IMR-90 (cell line): ENCODE measurements at regions of chr13 and their contacts with region 1.

Region 1: GRCh38 chr13:48749699-48750473 is 96.2 kb downstream of the CYSLTR2 start:
- DNase-seq: peak; percentile 99
- ATAC-seq: peak; percentile 98
- H3K4me3 ChIP-seq: no peak overlapping the region
- H3K27ac ChIP-seq: no peak overlapping the region
- H3K4me1 ChIP-seq: peaks cover 8% of the 10 kb centered on the region
- H3K27me3 ChIP-seq: no peaks in the 10 kb centered on the region
- CTCF ChIP-seq: peak; percentile 58
- POLR2A ChIP-seq: no peak
- RAD21 ChIP-seq: peak; percentile 46; the same call in 1 of the 2 replicates

Region 2: GRCh38 chr13:48644951-48645350 is 104.9 kb before region 1 on chr13:
- CTCF ChIA-PET with region 1: no interaction called
- POLR2A ChIA-PET with region 1: interaction called, 15 read pairs
- dilution Hi-C with region 1: no loop called
- in situ Hi-C with region 1: no loop called
- intact Hi-C with region 1: no loop called
- DNase-seq: no peak
- ATAC-seq: no peak
- H3K4me3 ChIP-seq: no peak overlapping the region
- H3K27ac ChIP-seq: no peak overlapping the region
- H3K4me1 ChIP-seq: no peaks in the 10 kb centered on the region
- H3K27me3 ChIP-seq: peaks cover 17% of the 10 kb centered on the region
- CTCF ChIP-seq: no peak
- POLR2A ChIP-seq: no peak
- RAD21 ChIP-seq: no peak